ENCODE measurements at regions of chr12 and their contacts with region 1.

Region 1: DNA sequence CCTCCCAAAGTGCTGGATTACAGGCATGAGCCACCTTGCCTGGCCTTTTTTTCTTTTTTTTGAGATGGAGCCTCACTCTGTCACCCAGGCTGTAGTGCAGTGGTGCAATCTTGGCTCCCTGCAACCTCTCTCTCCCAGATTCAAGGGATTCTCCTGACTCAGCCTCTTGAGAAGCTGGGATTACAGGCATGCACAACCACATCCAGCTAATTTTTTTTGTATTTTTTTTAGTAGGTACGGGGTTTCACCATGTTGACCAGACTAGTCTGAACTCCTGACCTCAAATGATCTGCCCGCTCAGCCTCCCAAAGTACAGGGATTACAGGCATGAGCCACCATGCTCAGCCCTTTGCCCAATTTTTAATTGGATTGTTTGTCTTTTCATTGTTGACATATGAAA is 58.0 kb downstream of the SINHCAF start:
- DNase-seq: no peak
- H3K4me3 ChIP-seq: no peak overlapping the region
- H3K27ac ChIP-seq: no peak overlapping the region
- H3K4me1 ChIP-seq: no peaks in the 10 kb centered on the region
- H3K27me3 ChIP-seq: no peaks in the 10 kb centered on the region
- CTCF ChIP-seq: no peak
- POLR2A ChIP-seq: no peak

Region 2: DNA sequence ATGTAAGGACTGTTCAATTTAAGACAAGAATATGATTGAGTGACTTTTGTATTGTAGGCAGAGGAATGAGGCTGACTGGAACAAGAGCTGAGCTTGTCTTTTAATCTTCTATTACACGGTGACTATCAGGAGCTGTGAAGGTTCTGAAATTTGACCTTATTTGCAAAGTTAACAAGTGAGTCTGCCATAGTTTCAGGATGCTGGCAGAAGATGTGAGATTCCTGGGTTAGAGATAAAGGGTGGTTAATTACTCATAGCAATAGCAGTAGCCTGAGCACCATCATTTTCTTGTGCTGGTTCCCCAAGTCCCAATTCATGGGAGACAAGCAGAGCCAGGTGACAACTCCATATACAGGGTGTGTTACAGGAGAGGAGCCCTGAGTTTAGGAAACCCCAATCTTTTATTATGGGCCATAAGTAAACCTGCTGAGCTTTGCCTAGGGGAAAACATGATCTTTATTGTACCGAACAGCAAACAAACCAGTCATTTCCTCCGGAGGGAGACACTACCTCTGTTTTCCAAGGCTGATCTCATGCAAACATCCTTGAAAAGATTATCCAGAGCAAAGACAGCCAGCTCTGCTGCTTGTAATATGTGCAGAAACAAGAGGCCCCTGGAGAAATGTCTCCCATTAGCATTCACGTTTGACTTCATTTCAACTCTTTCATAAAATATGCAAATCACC is 246.0 kb before region 1 on chr12:
- CTCF ChIA-PET with region 1: no interaction called
- POLR2A ChIA-PET with region 1: no interaction called
- dilution Hi-C with region 1: no loop called
- intact Hi-C with region 1: no loop called
- DNase-seq: peak; percentile 52
- H3K4me3 ChIP-seq: no peak overlapping the region
- H3K27ac ChIP-seq: no peak overlapping the region
- H3K4me1 ChIP-seq: peaks cover 35% of the 10 kb centered on the region
- H3K27me3 ChIP-seq: no peaks in the 10 kb centered on the region
- CTCF ChIP-seq: no peak
- POLR2A ChIP-seq: no peak

Region 3: GRCh38 chr12:31238764-31239387 is 29.1 kb before region 1 on chr12:
- CTCF ChIA-PET with region 1: interaction called, 42 read pairs
- POLR2A ChIA-PET with region 1: no interaction called
- dilution Hi-C with region 1: no loop called
- intact Hi-C with region 1: no loop called
- DNase-seq: peak; percentile 67
- H3K4me3 ChIP-seq: no peak overlapping the region
- H3K27ac ChIP-seq: no peak overlapping the region
- H3K4me1 ChIP-seq: no peaks in the 10 kb centered on the region
- H3K27me3 ChIP-seq: peaks cover 11 to 16% of the 10 kb centered on the region in 2 experiments
- CTCF ChIP-seq: peak; percentile 68 to 75
- POLR2A ChIP-seq: no peak

Region 4: GRCh38 chr12:31245822-31246469 is 22.0 kb before region 1 on chr12:
- CTCF ChIA-PET with region 1: interaction called, 222 read pairs
- POLR2A ChIA-PET with region 1: no interaction called
- dilution Hi-C with region 1: no loop called
- intact Hi-C with region 1: no loop called
- DNase-seq: no peak
- H3K4me3 ChIP-seq: no peak overlapping the region
- H3K27ac ChIP-seq: no peak overlapping the region
- H3K4me1 ChIP-seq: no peaks in the 10 kb centered on the region
- H3K27me3 ChIP-seq: peaks cover 0 to 3% of the 10 kb centered on the region in 2 experiments
- CTCF ChIP-seq: no peak
- POLR2A ChIP-seq: no peak

Region 5: DNA sequence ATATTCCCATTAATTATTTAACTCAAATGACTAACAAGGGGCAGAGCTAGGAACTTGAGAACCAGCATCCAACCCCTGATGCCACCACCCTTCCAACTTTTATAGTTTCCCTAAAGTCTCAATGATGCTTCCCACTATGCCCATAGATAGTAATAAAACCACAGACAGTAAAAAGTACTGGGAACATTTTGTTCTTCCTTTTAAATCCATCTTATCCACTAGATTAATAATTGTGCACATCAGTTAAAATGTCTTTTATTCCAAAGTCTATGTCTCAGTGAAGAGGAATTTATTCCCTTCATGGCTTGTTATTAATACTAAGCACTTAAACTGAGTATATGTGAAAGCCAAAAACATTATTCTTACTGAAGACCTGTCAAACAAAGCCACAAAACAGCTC is 12.2 kb after region 1 on chr12:
- CTCF ChIA-PET with region 1: interaction called, 16 read pairs
- POLR2A ChIA-PET with region 1: no interaction called
- dilution Hi-C with region 1: no loop called
- intact Hi-C with region 1: no loop called
- DNase-seq: no peak
- H3K4me3 ChIP-seq: no peak overlapping the region
- H3K27ac ChIP-seq: no peak overlapping the region
- H3K4me1 ChIP-seq: no peaks in the 10 kb centered on the region
- H3K27me3 ChIP-seq: no peaks in the 10 kb centered on the region
- CTCF ChIP-seq: no peak
- POLR2A ChIP-seq: no peak

Region 6: DNA sequence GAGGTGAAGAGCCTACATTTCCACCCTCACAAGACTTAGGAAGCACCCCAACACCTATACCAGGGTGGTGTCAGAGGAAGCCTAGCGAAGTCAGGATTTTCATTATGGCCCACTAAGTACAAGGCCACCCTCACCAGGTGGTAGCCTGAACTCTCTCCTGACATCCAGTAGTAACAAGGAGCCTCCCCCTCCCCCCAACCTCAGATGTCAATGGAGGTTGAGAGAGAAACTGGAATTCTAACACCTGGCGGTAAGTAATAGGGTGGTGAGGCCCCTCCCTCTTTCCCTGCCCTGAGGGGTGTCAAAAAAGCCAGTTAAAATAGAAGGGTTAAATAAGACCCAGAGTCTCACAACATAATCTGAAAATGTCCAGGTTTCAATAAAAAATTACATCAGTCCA is 20.4 kb after region 1 on chr12:
- CTCF ChIA-PET with region 1: interaction called, 32 read pairs
- POLR2A ChIA-PET with region 1: no interaction called
- dilution Hi-C with region 1: no loop called
- intact Hi-C with region 1: no loop called
- DNase-seq: no peak
- H3K4me3 ChIP-seq: no peak overlapping the region
- H3K27ac ChIP-seq: no peak overlapping the region
- H3K4me1 ChIP-seq: no peaks in the 10 kb centered on the region
- H3K27me3 ChIP-seq: no peaks in the 10 kb centered on the region
- CTCF ChIP-seq: no peak
- POLR2A ChIP-seq: no peak

Region 7: GRCh38 chr12:31300341-31300740 is 32.4 kb after region 1 on chr12:
- CTCF ChIA-PET with region 1: interaction called, 10 read pairs
- POLR2A ChIA-PET with region 1: no interaction called
- dilution Hi-C with region 1: no loop called
- intact Hi-C with region 1: no loop called
- DNase-seq: no peak
- H3K4me3 ChIP-seq: no peak overlapping the region
- H3K27ac ChIP-seq: no peak overlapping the region
- H3K4me1 ChIP-seq: no peaks in the 10 kb centered on the region
- H3K27me3 ChIP-seq: no peaks in the 10 kb centered on the region
- CTCF ChIP-seq: no peak
- POLR2A ChIP-seq: no peak

Region 8: GRCh38 chr12:31317471-31318395 is 49.8 kb after region 1 on chr12:
- CTCF ChIA-PET with region 1: interaction called, 12 read pairs
- POLR2A ChIA-PET with region 1: no interaction called
- dilution Hi-C with region 1: no loop called
- intact Hi-C with region 1: no loop called
- DNase-seq: peak; percentile 76
- H3K4me3 ChIP-seq: peak overlapping the region; percentile 5 to 88 (median 69)
- H3K27ac ChIP-seq: peak overlapping the region; percentile 74
- H3K4me1 ChIP-seq: peaks cover 46% of the 10 kb centered on the region
- H3K27me3 ChIP-seq: no peaks in the 10 kb centered on the region
- CTCF ChIP-seq: no peak
- POLR2A ChIP-seq: no peak

Measured in endothelial cell of umbilical vein (primary cell).